ENCODE measurements at regions of chr7 and their contacts with region 1.

Region 1: DNA sequence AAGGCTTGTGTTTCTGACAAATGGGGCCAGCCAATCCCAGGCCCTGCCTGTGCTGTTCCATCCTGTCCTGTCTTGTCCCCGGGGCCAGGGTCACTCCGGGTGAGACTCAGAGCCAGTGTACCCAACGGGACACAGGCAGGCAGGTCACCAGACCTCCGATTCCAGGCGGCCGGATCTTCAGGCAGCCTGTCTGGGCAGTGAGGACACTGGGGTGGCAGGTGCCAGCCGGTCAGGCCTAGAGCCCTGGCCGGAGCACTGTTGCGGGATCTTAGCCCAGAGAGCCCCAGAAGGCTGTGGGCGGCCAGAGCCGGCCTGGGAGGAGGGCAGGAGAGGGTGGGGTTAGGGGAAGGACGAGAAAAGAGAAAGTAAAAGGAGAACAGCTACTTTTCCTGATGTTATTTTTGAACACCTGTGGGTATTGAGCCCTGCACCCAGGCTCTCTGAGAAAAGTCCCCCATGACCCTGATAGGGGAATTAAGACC is 134.3 kb upstream of the TNRC18 start:
- DNase-seq: no peak
- ATAC-seq: no peak
- H3K4me3 ChIP-seq: no peak overlapping the region
- H3K27ac ChIP-seq: peak overlapping the region; percentile 95
- H3K4me1 ChIP-seq: peaks cover 46 to 79% of the 10 kb centered on the region in 2 experiments
- H3K27me3 ChIP-seq: no peaks in the 10 kb centered on the region
- CTCF ChIP-seq: no peak
- POLR2A ChIP-seq: no peak
- RAD21 ChIP-seq: no peak

Region 2: GRCh38 chr7:5375925-5376324 is 182.0 kb before region 1 on chr7:
- CTCF ChIA-PET with region 1: no interaction called
- POLR2A ChIA-PET with region 1: no interaction called
- RAD21 ChIA-PET with region 1: no interaction called
- intact Hi-C with region 1: no loop called
- DNase-seq: no peak
- ATAC-seq: no peak
- H3K4me3 ChIP-seq: no peak overlapping the region
- H3K27ac ChIP-seq: no peak overlapping the region
- H3K4me1 ChIP-seq: peaks cover 0 to 5% of the 10 kb centered on the region in 2 experiments; a peak in 2 of 4 replicates
- H3K27me3 ChIP-seq: no peaks in the 10 kb centered on the region
- CTCF ChIP-seq: no peak
- POLR2A ChIP-seq: no peak
- RAD21 ChIP-seq: no peak

Region 3: GRCh38 chr7:5526100-5526905 is 31.7 kb before region 1 on chr7:
- CTCF ChIA-PET with region 1: interaction called, 5 read pairs
- POLR2A ChIA-PET with region 1: interaction called, 7 read pairs
- RAD21 ChIA-PET with region 1: no interaction called
- intact Hi-C with region 1: loop called (anchors 2 kb)
- DNase-seq: no peak
- ATAC-seq: peak; percentile 4
- H3K4me3 ChIP-seq: no peak overlapping the region
- H3K27ac ChIP-seq: peak overlapping the region; percentile 75
- H3K4me1 ChIP-seq: peaks cover 3 to 34% of the 10 kb centered on the region in 2 experiments; a peak in 3 of 4 replicates
- H3K27me3 ChIP-seq: no peaks in the 10 kb centered on the region
- CTCF ChIP-seq: 0 out of 6 replicates have a peak, but pooled peaks of 1 of the 3 experiments have one; percentile 2
- POLR2A ChIP-seq: no peak
- RAD21 ChIP-seq: no peak

Region 4: GRCh38 chr7:5665094-5666025 is 107.4 kb after region 1 on chr7:
- CTCF ChIA-PET with region 1: interaction called, 16 read pairs
- POLR2A ChIA-PET with region 1: no interaction called
- RAD21 ChIA-PET with region 1: no interaction called
- intact Hi-C with region 1: no loop called
- DNase-seq: peak; percentile 62
- ATAC-seq: peak; percentile 93
- H3K4me3 ChIP-seq: no peak overlapping the region
- H3K27ac ChIP-seq: no peak overlapping the region
- H3K4me1 ChIP-seq: peaks cover 0 to 3% of the 10 kb centered on the region in 2 experiments; a peak in 1 of 4 replicates
- H3K27me3 ChIP-seq: no peaks in the 10 kb centered on the region
- CTCF ChIP-seq: peak; percentile 75 to 94 (median 92)
- POLR2A ChIP-seq: no peak
- RAD21 ChIP-seq: peak; percentile 96

Region 5: GRCh38 chr7:6057316-6058129 is 499.6 kb after region 1 on chr7:
- CTCF ChIA-PET with region 1: no interaction called
- POLR2A ChIA-PET with region 1: no interaction called
- RAD21 ChIA-PET with region 1: no interaction called
- intact Hi-C with region 1: no loop called
- DNase-seq: no peak
- ATAC-seq: no peak
- H3K4me3 ChIP-seq: peak overlapping the region; percentile 66 to 70
- H3K27ac ChIP-seq: no peak overlapping the region
- H3K4me1 ChIP-seq: peaks cover 18 to 23% of the 10 kb centered on the region in 2 experiments
- H3K27me3 ChIP-seq: no peaks in the 10 kb centered on the region
- CTCF ChIP-seq: no peak
- POLR2A ChIP-seq: no peak
- RAD21 ChIP-seq: no peak